ENCODE measurements at regions of chr6 and their contacts with region 1.

Region 1: GRCh38 chr6:79869600-79870084 is 77.7 kb downstream of the ELOVL4 start:
- DNase-seq: peak; percentile 60 to 78
- ATAC-seq: peak; percentile 93 to 99 (median 98)
- H3K4me3 ChIP-seq: peak overlapping the region in 7 of 10 donors; percentile 5 to 39 (median 30)
- H3K27ac ChIP-seq: no peak overlapping the region
- H3K4me1 ChIP-seq: peaks cover 0 to 16% (median 0%) of the 10 kb centered on the region in 9 donors
- H3K27me3 ChIP-seq: peaks cover 0 to 6% (median 0%) of the 10 kb centered on the region in 7 donors
- CTCF ChIP-seq: peak; percentile 79 to 96 (median 91)

Region 2: DNA sequence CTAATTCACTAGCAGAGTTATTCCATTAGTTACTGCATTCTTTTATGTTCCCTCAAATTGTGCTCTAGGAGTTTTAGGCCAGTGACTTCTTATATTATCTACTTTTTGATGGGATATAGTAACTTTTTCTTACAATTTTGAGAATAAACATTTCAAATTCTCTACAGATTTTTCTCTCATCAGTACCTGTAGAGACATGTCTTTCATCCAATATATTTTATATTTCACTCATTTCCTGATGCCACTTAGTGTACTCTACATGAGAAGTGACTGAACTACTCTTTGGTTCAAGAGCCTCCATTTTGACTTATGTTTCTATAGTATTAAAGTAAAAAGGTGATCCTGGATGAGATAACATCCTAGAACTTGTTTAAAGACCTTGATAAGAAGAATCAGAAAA is 30.8 kb before region 1 on chr6:
- intact Hi-C with region 1: loop called in 1 of 10 experiments (anchors 2 kb)
- DNase-seq: no peak
- ATAC-seq: no peak
- H3K4me3 ChIP-seq: no peak overlapping the region
- H3K27ac ChIP-seq: no peak overlapping the region
- H3K4me1 ChIP-seq: no peaks in the 10 kb centered on the region
- H3K27me3 ChIP-seq: no peaks in the 10 kb centered on the region
- CTCF ChIP-seq: no peak